ENCODE measurements at regions of chr14 and their contacts with region 1.

Region 1: DNA sequence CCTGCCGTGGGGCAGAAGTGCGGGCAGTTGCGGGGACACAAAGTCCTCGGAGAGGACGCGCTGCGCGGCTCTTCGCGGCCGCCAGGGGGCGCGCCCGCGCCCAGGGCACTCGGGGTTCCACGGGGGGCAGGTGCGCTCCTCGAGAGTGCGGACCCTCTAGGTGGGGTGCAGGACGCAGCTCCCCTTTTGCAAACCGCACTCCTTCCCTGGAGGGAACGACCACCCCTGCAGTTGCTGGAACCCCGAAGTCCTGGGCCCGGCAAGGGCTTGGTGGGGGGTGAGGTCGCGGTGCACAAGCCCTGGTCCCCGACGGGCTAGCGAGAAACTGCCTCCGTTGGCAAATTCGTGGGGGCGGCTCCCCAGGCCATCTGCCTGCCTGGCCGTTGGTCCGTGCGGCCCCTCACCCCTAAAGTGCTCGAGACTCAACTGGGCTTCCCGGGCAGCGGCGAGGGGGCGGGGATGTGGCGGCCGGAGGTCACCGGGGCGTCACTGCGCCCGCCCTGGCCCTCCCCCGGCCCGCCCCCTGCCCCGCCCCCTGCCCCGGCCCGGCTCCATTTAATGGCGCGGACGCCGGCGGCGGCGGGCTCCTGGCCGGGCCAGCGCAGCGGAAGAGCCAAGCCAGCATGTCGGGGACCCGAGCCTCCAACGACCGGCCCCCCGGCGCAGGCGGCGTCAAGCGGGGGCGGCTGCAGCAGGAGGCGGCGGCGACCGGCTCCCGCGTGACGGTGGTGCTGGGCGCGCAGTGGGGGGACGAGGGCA is at the start of gene ADSS1:
- DNase-seq: peak; percentile 81 to 83
- ATAC-seq: peak; percentile 40 to 73 (median 54)
- H3K4me3 ChIP-seq: peak within 1 kb of the TSS; percentile 34 to 84 (median 73)
- H3K27ac ChIP-seq: peak within 1 kb of the TSS; percentile 85 to 98 (median 90)
- H3K4me1 ChIP-seq: peaks cover 23 to 80% (median 47%) of the 10 kb centered on the region in 9 donors
- H3K27me3 ChIP-seq: no peaks in the 10 kb centered on the region
- CTCF ChIP-seq: peak; percentile 83 to 98 (median 92)
- total RNA-seq, gene ADSS1: 159 to 295 (median 195) TPM

Region 2: DNA sequence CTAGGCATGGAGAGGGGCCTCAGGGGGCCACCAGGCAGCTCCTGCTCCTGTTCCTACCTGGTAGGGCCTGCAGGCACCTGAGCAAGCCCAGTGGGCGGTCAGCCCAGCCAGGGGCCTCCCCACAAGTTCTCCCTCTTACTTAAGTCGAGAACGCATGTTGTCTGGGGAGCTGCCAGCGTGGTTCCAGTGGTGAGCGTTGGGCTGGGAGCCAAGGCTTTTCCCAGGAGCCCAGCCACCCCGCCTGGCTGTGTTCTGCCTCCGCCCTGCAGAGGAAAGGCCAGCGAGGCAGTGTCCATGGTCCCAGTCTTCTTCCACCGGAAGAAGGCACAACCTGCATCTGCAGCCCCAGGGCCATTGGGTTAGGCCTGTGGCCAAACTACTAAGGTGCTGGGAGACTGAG is 142.9 kb before region 1 on chr14:
- intact Hi-C with region 1: loop called in 3 of 10 experiments (anchors 10 kb)
- DNase-seq: peak; percentile 73 to 83
- ATAC-seq: peak; percentile 3 to 57 (median 40)
- H3K4me3 ChIP-seq: peak overlapping the region; percentile 38 to 60 (median 54)
- H3K27ac ChIP-seq: peak overlapping the region; percentile 81 to 98 (median 93)
- H3K4me1 ChIP-seq: peaks cover 8 to 92% (median 48%) of the 10 kb centered on the region in 9 donors
- H3K27me3 ChIP-seq: peaks cover 0 to 39% (median 11%) of the 10 kb centered on the region in 7 donors
- CTCF ChIP-seq: no peak

Region 3: DNA sequence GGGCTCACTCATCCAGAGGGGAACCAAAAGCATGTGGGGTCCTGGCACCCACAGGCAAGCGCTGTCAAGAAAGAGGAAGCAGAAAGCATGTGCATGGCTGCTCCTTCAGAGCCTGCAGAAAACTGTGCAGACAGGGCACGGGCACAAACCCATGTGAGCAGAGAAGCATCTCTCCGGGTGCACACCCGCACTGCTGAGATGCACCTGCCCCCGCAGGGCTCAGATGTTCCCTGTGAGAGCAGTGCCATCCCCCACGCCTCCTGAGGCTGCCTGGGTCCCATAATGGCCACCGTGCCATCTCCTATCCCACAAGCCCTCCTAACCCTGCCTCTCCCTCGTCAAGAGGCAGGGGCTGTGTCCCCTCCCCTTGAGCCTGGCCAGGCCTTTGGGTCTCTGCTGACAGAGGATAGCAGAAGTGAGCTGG is 66.7 kb before region 1 on chr14:
- intact Hi-C with region 1: no loop called
- DNase-seq: no peak
- ATAC-seq: peak in 1 of 8 donors; percentile 7
- H3K4me3 ChIP-seq: no peak overlapping the region
- H3K27ac ChIP-seq: no peak overlapping the region
- H3K4me1 ChIP-seq: peaks cover 2 to 37% (median 18%) of the 10 kb centered on the region in 9 donors
- H3K27me3 ChIP-seq: peaks cover 0 to 23% (median 0%) of the 10 kb centered on the region in 7 donors
- CTCF ChIP-seq: no peak

Region 4: GRCh38 chr14:104786091-104786586 is 62.3 kb after region 1 on chr14:
- intact Hi-C with region 1: no loop called
- DNase-seq: peak in 1 of 2 donors; percentile 21
- ATAC-seq: peak; percentile 11 to 50 (median 38)
- H3K4me3 ChIP-seq: no peak overlapping the region
- H3K27ac ChIP-seq: peak overlapping the region in 1 of 10 donors; percentile 87
- H3K4me1 ChIP-seq: peaks cover 3 to 48% (median 30%) of the 10 kb centered on the region in 9 donors
- H3K27me3 ChIP-seq: no peaks in the 10 kb centered on the region
- CTCF ChIP-seq: peak in 1 of 9 donors; percentile 10

Region 5: GRCh38 chr14:105161964-105162668 is 438.3 kb after region 1 on chr14:
- intact Hi-C with region 1: no loop called
- DNase-seq: no peak
- ATAC-seq: peak in 6 of 8 donors; percentile 23 to 73 (median 41)
- H3K4me3 ChIP-seq: no peak overlapping the region
- H3K27ac ChIP-seq: no peak overlapping the region
- H3K4me1 ChIP-seq: peaks cover 0 to 60% (median 23%) of the 10 kb centered on the region in 9 donors
- H3K27me3 ChIP-seq: peaks cover 0 to 12% (median 8%) of the 10 kb centered on the region in 7 donors
- CTCF ChIP-seq: no peak

Measured in heart right ventricle (tissue), 16 donors.